ENCODE measurements at regions of chr12 and their contacts with region 1.

Region 1: DNA sequence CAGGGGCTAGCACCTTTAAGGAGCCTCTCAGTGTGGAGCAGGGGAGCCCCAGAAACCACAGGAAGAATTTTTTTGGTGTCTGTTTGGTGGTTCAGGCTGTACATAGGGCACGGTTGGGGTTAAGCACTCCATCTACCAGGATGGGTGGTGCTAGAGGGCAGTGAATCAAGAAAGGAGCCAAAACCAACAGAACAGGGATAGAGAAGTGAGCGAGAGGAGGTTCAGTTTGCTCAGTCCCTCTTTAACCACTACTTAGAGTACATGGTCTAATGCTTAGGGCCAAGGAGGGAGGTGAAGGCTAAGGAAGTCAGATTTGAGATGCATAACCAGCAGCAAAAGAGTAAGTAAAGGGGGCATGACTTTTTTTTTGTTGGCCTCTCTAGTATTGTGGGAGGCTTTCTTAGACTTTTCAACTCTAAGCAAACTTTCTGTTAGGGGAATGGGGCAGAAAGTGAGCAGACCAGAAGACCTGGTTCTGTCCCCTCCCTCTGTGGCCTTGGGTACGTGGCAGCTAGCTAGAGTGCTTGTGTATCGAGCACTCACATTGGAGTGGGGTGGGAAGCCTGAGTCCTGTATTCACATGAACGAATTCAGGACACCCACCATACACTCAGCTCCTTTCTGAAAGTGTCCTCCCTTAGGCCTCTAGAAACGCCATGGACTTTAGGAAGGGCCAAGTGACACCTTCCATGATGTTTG is 6.6 kb upstream of the NPFF start:
- DNase-seq: no peak
- ATAC-seq: no peak
- H3K4me3 ChIP-seq: no peak overlapping the region
- H3K4me3 Mint-ChIP-seq: no peak overlapping the region
- H3K27ac ChIP-seq: no peak overlapping the region
- H3K27ac Mint-ChIP-seq: no peak overlapping the region
- H3K4me1 ChIP-seq: peaks cover 0 to 2% of the 10 kb centered on the region in 2 experiments
- H3K4me1 Mint-ChIP-seq: peaks cover under 1 to 3% (median 3%) of the 10 kb centered on the region in 3 donors
- H3K27me3 ChIP-seq: no peaks in the 10 kb centered on the region
- H3K27me3 Mint-ChIP-seq: no peaks in the 10 kb centered on the region

Region 2: GRCh38 chr12:53441040-53441833 is 72.6 kb before region 1 on chr12 and contains the start of gene PRR13:
- CTCF ChIA-PET with region 1: no interaction called
- POLR2A ChIA-PET with region 1: interaction called in 1 of 2 experiments, 10 read pairs
- DNase-seq: peak; percentile 92 to 100 (median 99)
- ATAC-seq: peak; percentile 98 to 99 (median 99)
- H3K4me3 ChIP-seq: peak within 1 kb of the TSS; percentile 90 to 94
- H3K4me3 Mint-ChIP-seq: peak within 1 kb of the TSS; percentile 86 to 97 (median 95)
- H3K27ac ChIP-seq: peak within 1 kb of the TSS; percentile 74
- H3K27ac Mint-ChIP-seq: peak within 1 kb of the TSS; percentile 96 to 98
- H3K4me1 ChIP-seq: peaks cover 14 to 34% of the 10 kb centered on the region in 2 experiments
- H3K4me1 Mint-ChIP-seq: peaks cover 38 to 51% (median 47%) of the 10 kb centered on the region in 3 donors
- H3K27me3 ChIP-seq: no peaks in the 10 kb centered on the region
- H3K27me3 Mint-ChIP-seq: no peaks in the 10 kb centered on the region
- total RNA-seq, gene PRR13: 175 to 215 (median 187) TPM

Measured in T-cell (primary cell).